PC-3 (cell line): ENCODE measurements at regions of chr14 and their contacts with region 1.

Region 1: GRCh38 chr14:61631045-61631687 is 64.1 kb upstream of the HIF1A start:
- DNase-seq: peak; percentile 34
- ATAC-seq: peak; percentile 81
- H3K4me3 ChIP-seq: no peak overlapping the region
- H3K27ac ChIP-seq: peak overlapping the region; percentile 15
- H3K4me1 ChIP-seq: peaks cover 17% of the 10 kb centered on the region
- H3K27me3 ChIP-seq: no peaks in the 10 kb centered on the region
- CTCF ChIP-seq: no peak

Region 2: DNA sequence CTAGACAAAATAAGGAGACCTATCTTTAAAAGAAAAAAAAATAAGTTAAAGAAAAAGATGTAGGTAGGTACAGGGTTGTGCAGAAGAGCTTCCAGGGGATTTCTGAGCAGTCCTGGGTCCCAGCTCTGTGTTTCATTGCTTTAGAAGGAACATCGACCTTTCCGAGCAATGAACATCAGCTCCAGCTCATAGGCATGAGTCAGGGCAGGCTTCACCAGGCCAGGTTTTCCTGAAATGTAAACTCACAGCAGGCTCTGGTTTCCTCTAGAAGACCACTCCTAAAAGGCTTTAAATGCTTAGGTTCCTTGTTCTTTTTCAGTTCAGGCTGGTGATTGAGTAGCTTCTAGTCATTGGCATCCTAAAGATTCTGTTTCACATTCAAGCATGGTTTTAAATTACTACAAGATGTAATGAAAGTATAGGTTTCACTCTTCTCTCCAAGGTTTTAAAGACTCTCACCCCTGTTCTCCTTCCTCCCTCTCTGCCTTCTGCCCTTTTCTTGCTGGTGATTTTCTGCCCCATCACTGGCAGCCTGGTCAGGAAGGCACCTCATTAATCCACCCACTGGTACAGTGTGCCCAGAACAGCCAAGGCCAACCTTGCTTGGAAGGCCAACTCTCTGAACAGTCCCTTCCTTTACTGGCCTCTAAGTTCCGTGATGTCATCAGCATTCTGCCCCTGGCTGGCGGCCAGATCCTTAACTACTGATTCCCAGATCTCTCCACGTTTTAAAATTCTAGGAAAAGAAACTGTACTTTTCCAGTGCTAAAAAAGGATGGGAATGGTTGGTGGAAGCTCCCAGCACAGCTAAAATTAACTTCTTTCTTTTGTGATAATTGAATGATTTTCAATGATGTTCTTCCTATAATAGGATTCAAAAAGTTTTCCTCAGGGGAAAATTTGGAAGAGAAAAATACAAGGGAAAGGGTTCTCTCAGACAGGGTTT is 45.3 kb before region 1 on chr14:
- CTCF ChIA-PET with region 1: no interaction called
- POLR2A ChIA-PET with region 1: no interaction called
- intact Hi-C with region 1: loop called (anchors 1 kb)
- DNase-seq: peak; percentile 79
- ATAC-seq: peak; percentile 62
- H3K4me3 ChIP-seq: peak overlapping the region; percentile 9; the same call in 1 of the 2 replicates
- H3K27ac ChIP-seq: peak overlapping the region; percentile 93
- H3K4me1 ChIP-seq: peaks cover 34% of the 10 kb centered on the region
- H3K27me3 ChIP-seq: no peaks in the 10 kb centered on the region
- CTCF ChIP-seq: no peak

Region 3: GRCh38 chr14:61620130-61620946 is 10.8 kb before region 1 on chr14:
- CTCF ChIA-PET with region 1: interaction called, 3 read pairs
- POLR2A ChIA-PET with region 1: no interaction called
- intact Hi-C with region 1: loop called (anchors 1 kb)
- DNase-seq: peak; percentile 56
- ATAC-seq: peak; percentile 85
- H3K4me3 ChIP-seq: no peak overlapping the region
- H3K27ac ChIP-seq: peak overlapping the region; percentile 50
- H3K4me1 ChIP-seq: peaks cover 51% of the 10 kb centered on the region
- H3K27me3 ChIP-seq: no peaks in the 10 kb centered on the region
- CTCF ChIP-seq: no peak

Region 4: DNA sequence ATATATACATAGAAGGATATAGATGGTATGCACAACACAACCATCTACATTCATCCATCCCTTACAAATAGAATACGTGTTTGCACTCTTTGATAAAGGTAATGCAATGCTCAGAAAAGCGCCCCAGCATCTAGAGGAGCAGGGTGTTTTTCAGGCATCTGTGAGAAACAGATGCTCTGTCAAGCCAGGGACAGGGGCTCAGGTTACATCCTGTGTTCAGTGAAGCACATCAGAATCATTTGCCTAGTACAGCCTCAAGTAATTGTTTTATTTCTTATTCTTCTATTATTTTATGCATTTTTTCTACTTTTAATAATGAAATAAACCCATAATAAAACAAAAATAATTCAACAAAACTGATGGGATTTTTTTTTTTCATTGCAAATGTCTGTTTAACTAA is 13.7 kb after region 1 on chr14:
- CTCF ChIA-PET with region 1: interaction called, 7 read pairs
- POLR2A ChIA-PET with region 1: no interaction called
- intact Hi-C with region 1: loop called (anchors 1 kb)
- DNase-seq: peak; percentile 53
- ATAC-seq: peak; percentile 34
- H3K4me3 ChIP-seq: no peak overlapping the region
- H3K27ac ChIP-seq: no peak overlapping the region
- H3K4me1 ChIP-seq: peaks cover 53% of the 10 kb centered on the region
- H3K27me3 ChIP-seq: no peaks in the 10 kb centered on the region
- CTCF ChIP-seq: no peak